MCF 10A (cell line): ENCODE measurements at regions of chr4 and their contacts with region 1.

Region 1: GRCh38 chr4:21790438-21791029 is 158.0 kb downstream of the KCNIP4 start:
- DNase-seq: peak; percentile 54
- H3K4me3 Mint-ChIP-seq: no peak overlapping the region
- H3K27ac Mint-ChIP-seq: no peak overlapping the region
- H3K4me1 Mint-ChIP-seq: peaks cover 6% of the 10 kb centered on the region
- H3K27me3 Mint-ChIP-seq: no peaks in the 10 kb centered on the region
- CTCF ChIP-seq: peak; percentile 43

Region 2: DNA sequence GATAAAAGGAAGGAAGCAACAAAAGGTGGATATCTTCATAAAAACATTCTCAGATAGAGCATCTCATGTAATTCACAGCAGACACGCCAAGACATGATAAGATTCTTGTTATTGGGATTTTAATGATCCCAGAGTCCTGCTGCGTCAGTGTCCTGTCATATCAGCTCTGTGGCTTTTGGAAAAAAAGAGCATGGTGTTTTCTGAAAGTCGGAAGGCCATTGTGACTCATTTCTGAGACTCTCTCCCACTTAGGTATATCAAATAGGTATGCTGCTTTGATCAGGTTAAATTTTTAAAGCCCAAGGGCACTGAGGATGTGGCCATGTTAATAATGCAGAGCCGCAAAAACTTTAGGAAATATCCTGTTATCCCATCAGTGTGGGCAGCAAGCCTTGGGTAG is 323.0 kb before region 1 on chr4:
- CTCF ChIA-PET with region 1: no interaction called
- POLR2A ChIA-PET with region 1: no interaction called
- intact Hi-C with region 1: no loop called
- DNase-seq: no peak
- H3K4me3 Mint-ChIP-seq: no peak overlapping the region
- H3K27ac Mint-ChIP-seq: no peak overlapping the region
- H3K4me1 Mint-ChIP-seq: peaks cover 31% of the 10 kb centered on the region
- H3K27me3 Mint-ChIP-seq: peaks cover 10% of the 10 kb centered on the region
- CTCF ChIP-seq: no peak

Region 3: DNA sequence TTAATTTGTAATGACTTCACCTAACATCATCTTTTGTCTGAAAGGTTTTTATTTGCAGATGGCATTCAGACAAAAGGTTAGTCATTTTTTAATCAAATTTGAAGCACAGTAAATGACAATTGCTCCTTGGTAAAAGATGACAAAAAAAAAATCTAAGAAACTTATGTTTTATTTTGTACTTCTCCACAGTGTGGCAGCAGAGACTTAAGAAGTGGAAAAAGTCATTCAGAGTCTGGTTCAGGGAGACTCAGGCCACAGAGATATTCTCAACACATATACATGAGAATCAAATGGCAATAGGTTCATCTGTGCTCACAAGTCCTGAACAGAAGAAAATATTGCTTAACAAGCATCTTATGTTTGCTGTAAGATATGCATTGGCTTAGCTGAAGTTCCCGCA is 278.2 kb before region 1 on chr4:
- CTCF ChIA-PET with region 1: interaction called, 10 read pairs
- POLR2A ChIA-PET with region 1: no interaction called
- intact Hi-C with region 1: no loop called
- DNase-seq: peak; percentile 55
- H3K4me3 Mint-ChIP-seq: no peak overlapping the region
- H3K27ac Mint-ChIP-seq: no peak overlapping the region
- H3K4me1 Mint-ChIP-seq: peaks cover 5% of the 10 kb centered on the region
- H3K27me3 Mint-ChIP-seq: peaks cover 54% of the 10 kb centered on the region
- CTCF ChIP-seq: peak; percentile 62

Region 4: GRCh38 chr4:21780158-21780557 is 10.4 kb before region 1 on chr4:
- CTCF ChIA-PET with region 1: interaction called, 21 read pairs
- POLR2A ChIA-PET with region 1: no interaction called
- intact Hi-C with region 1: no loop called
- DNase-seq: peak; percentile 31
- H3K4me3 Mint-ChIP-seq: no peak overlapping the region
- H3K27ac Mint-ChIP-seq: no peak overlapping the region
- H3K4me1 Mint-ChIP-seq: peaks cover 6% of the 10 kb centered on the region
- H3K27me3 Mint-ChIP-seq: no peaks in the 10 kb centered on the region
- CTCF ChIP-seq: no peak

Region 5: DNA sequence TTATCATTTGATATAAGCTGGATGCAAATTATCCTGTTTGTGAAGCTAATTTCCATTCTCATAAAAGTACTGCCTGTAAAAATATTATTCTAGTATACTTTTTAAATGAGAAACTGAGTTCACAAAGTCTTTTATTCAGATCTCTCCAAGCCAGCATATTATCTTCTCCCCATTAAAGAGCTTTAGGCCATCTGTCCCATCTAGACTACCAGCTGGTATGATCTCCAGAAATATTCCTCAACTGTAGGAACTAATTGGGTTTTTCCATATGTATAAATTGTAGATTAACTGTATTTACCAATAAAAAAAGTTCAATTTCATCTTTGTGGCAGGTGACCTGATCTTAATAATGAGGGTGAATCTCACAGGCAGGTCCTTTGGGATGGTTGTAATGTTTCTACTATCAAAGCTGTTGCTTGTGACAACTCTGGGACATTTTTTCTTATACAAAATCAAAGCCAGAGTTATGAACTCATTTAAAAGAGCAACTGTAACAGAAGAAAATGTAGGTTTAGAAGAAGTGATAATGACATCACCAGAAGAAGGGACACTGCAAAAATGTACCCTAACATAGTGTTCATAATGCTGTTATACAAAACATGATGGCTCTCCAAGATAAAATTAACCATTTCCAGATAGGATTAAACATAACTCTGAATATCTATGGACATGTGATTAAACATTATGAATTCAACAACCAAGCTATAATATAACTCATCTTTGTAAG is 25.3 kb after region 1 on chr4:
- CTCF ChIA-PET with region 1: interaction called, 10 read pairs
- POLR2A ChIA-PET with region 1: no interaction called
- intact Hi-C with region 1: no loop called
- DNase-seq: no peak
- H3K4me3 Mint-ChIP-seq: no peak overlapping the region
- H3K27ac Mint-ChIP-seq: no peak overlapping the region
- H3K4me1 Mint-ChIP-seq: no peaks in the 10 kb centered on the region
- H3K27me3 Mint-ChIP-seq: no peaks in the 10 kb centered on the region
- CTCF ChIP-seq: no peak

Region 6: GRCh38 chr4:22356987-22357596 is 566.6 kb after region 1 on chr4:
- CTCF ChIA-PET with region 1: interaction called, 90 read pairs
- POLR2A ChIA-PET with region 1: no interaction called
- intact Hi-C with region 1: loop called (anchors 1 kb)
- DNase-seq: peak; percentile 28
- H3K4me3 Mint-ChIP-seq: no peak overlapping the region
- H3K27ac Mint-ChIP-seq: no peak overlapping the region
- H3K4me1 Mint-ChIP-seq: no peaks in the 10 kb centered on the region
- H3K27me3 Mint-ChIP-seq: no peaks in the 10 kb centered on the region
- CTCF ChIP-seq: peak; percentile 32

Region 7: GRCh38 chr4:22384154-22384553 is 593.6 kb after region 1 on chr4:
- CTCF ChIA-PET with region 1: interaction called, 332 read pairs
- POLR2A ChIA-PET with region 1: interaction called, 9 read pairs
- intact Hi-C with region 1: loop called (anchors 1 kb)
- DNase-seq: no peak
- H3K4me3 Mint-ChIP-seq: no peak overlapping the region
- H3K27ac Mint-ChIP-seq: no peak overlapping the region
- H3K4me1 Mint-ChIP-seq: peaks cover 6% of the 10 kb centered on the region
- H3K27me3 Mint-ChIP-seq: no peaks in the 10 kb centered on the region
- CTCF ChIP-seq: no peak

Region 8: GRCh38 chr4:22607382-22607781 is 816.8 kb after region 1 on chr4:
- CTCF ChIA-PET with region 1: no interaction called
- POLR2A ChIA-PET with region 1: no interaction called
- intact Hi-C with region 1: loop called (anchors 5 kb)
- DNase-seq: peak; percentile 69
- H3K4me3 Mint-ChIP-seq: no peak overlapping the region
- H3K27ac Mint-ChIP-seq: no peak overlapping the region
- H3K4me1 Mint-ChIP-seq: peaks cover 7% of the 10 kb centered on the region
- H3K27me3 Mint-ChIP-seq: no peaks in the 10 kb centered on the region
- CTCF ChIP-seq: peak; percentile 52